PC-9 (cell line): ENCODE measurements at regions of chr12 and their contacts with region 1.

Region 1: GRCh38 chr12:10395390-10395998 is 5.7 kb upstream of the KLRK1 start:
- DNase-seq: peak; percentile 78 to 89
- H3K4me3 ChIP-seq: peak overlapping the region; percentile 9; the same call in 1 of the 2 replicates
- H3K27ac ChIP-seq: peak overlapping the region; percentile 66
- H3K4me1 ChIP-seq: peaks cover 38% of the 10 kb centered on the region
- H3K27me3 ChIP-seq: no peaks in the 10 kb centered on the region
- CTCF ChIP-seq: no peak

Region 2: GRCh38 chr12:9731797-9732196 is 663.7 kb before region 1 on chr12:
- CTCF ChIA-PET with region 1: no interaction called
- POLR2A ChIA-PET with region 1: no interaction called
- intact Hi-C with region 1: no loop called
- DNase-seq: no peak
- H3K4me3 ChIP-seq: no peak overlapping the region
- H3K27ac ChIP-seq: no peak overlapping the region
- H3K4me1 ChIP-seq: peaks cover 8% of the 10 kb centered on the region; the same call in 1 of the 2 replicates
- H3K27me3 ChIP-seq: no peaks in the 10 kb centered on the region
- CTCF ChIP-seq: no peak

Region 3: DNA sequence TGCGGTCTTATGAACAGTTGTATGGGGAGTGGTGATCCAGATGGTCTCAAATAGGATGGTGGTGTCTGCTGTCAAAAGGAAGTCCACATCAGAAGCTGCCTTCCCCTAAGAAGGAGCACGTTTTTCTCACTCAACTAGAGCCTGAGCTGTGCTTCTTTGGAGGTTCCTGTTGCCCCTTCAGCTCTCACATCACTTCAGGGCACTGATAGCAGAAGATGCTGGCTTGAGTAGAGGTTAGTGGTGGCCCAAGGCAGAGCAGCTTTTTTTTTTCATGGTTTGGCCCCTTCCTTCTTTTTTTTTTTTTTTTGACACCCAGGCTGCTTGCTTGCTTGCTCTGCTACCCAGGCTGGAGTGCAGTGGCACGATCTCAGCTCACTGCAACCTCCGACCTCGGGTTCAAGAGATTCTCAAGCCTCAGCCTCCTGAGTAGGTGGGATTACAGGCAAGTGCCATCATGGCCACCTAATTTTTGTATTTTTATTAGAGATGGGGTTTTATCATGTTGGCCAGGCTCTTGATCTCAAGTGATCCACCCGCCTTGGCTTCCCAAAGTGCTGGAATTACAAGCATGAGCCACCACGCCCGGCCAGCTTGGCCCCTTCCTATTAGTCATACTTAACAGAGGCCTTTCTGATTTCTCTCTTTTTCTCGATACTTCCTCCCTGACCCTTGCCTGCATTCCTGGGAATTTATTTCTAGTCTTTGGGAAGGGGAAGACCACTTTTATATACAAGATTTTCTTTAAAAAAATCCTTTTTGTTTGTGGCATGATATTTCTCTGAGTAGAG is 56.2 kb before region 1 on chr12:
- CTCF ChIA-PET with region 1: no interaction called
- POLR2A ChIA-PET with region 1: no interaction called
- intact Hi-C with region 1: loop called (anchors 2 kb)
- DNase-seq: peak; percentile 53 to 70
- H3K4me3 ChIP-seq: no peak overlapping the region
- H3K27ac ChIP-seq: no peak overlapping the region
- H3K4me1 ChIP-seq: 0 out of 2 replicates have a peak, but pooled peaks cover 14% of the 10 kb centered on the region
- H3K27me3 ChIP-seq: no peaks in the 10 kb centered on the region
- CTCF ChIP-seq: no peak

Region 4: GRCh38 chr12:10364815-10365622 is 30.5 kb before region 1 on chr12:
- CTCF ChIA-PET with region 1: no interaction called
- POLR2A ChIA-PET with region 1: interaction called, 9 read pairs
- intact Hi-C with region 1: loop called (anchors 1 kb)
- DNase-seq: peak; percentile 73 to 79
- H3K4me3 ChIP-seq: peak overlapping the region; percentile 77
- H3K27ac ChIP-seq: peak overlapping the region; percentile 63
- H3K4me1 ChIP-seq: peaks cover 30% of the 10 kb centered on the region
- H3K27me3 ChIP-seq: no peaks in the 10 kb centered on the region
- CTCF ChIP-seq: no peak

Region 5: DNA sequence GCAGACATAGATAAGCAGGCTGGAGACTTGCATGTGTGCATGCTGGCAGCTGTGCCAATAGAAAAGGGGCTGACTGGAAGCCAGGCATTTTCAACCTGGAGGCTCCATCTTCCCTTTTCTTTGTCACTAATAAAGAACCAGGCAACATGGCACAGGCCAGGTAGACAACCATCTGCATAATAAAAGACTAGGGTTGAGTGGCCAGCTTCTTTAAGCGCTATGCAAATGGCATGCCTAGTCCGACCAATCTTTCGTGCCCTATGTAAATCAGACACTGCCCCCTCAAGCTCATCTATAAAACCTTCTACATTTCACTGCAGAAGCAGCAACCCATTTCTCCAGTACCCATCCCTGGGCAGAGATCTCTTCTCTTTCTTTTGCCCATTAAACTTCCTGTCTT is 62.3 kb after region 1 on chr12:
- CTCF ChIA-PET with region 1: no interaction called
- POLR2A ChIA-PET with region 1: no interaction called
- intact Hi-C with region 1: no loop called
- DNase-seq: no peak
- H3K4me3 ChIP-seq: no peak overlapping the region
- H3K27ac ChIP-seq: no peak overlapping the region
- H3K4me1 ChIP-seq: 0 out of 2 replicates have a peak, but pooled peaks cover 4% of the 10 kb centered on the region
- H3K27me3 ChIP-seq: no peaks in the 10 kb centered on the region
- CTCF ChIP-seq: no peak